ENCODE measurements at regions of chr15 and their contacts with region 1.

Region 1: GRCh38 chr15:31215490-31216214 is 111.0 kb upstream of the KLF13 start:
- DNase-seq: peak; percentile 82 to 83
- ATAC-seq: peak; percentile 71 to 74
- H3K4me3 ChIP-seq: peak overlapping the region; percentile 55 to 67 (median 59)
- H3K27ac ChIP-seq: peak overlapping the region; percentile 83 to 94 (median 92)
- H3K4me1 ChIP-seq: peaks cover 12 to 20% of the 10 kb centered on the region in 2 donors
- H3K27me3 ChIP-seq: no peaks in the 10 kb centered on the region
- CTCF ChIP-seq: peak; percentile 88 to 95 (median 90)
- POLR2A ChIP-seq: peak; percentile 61 to 69

Region 2: GRCh38 chr15:30903497-30904201 is 312.0 kb before region 1 on chr15 and contains the start of gene FAN1:
- in situ Hi-C with region 1: no loop called
- intact Hi-C with region 1: loop called (anchors 10 kb)
- DNase-seq: peak; percentile 81 to 89
- ATAC-seq: peak; percentile 95 to 98
- H3K4me3 ChIP-seq: peak within 1 kb of the TSS; percentile 63 to 98 (median 85)
- H3K27ac ChIP-seq: peak within 1 kb of the TSS; percentile 79 to 91 (median 87)
- H3K4me1 ChIP-seq: peaks cover 26 to 31% of the 10 kb centered on the region in 2 donors
- H3K27me3 ChIP-seq: no peaks in the 10 kb centered on the region
- CTCF ChIP-seq: no peak
- POLR2A ChIP-seq: peak; percentile 71 to 78
- total RNA-seq, gene FAN1: 20.0 to 27.5 (median 25.3) TPM

Region 3: DNA sequence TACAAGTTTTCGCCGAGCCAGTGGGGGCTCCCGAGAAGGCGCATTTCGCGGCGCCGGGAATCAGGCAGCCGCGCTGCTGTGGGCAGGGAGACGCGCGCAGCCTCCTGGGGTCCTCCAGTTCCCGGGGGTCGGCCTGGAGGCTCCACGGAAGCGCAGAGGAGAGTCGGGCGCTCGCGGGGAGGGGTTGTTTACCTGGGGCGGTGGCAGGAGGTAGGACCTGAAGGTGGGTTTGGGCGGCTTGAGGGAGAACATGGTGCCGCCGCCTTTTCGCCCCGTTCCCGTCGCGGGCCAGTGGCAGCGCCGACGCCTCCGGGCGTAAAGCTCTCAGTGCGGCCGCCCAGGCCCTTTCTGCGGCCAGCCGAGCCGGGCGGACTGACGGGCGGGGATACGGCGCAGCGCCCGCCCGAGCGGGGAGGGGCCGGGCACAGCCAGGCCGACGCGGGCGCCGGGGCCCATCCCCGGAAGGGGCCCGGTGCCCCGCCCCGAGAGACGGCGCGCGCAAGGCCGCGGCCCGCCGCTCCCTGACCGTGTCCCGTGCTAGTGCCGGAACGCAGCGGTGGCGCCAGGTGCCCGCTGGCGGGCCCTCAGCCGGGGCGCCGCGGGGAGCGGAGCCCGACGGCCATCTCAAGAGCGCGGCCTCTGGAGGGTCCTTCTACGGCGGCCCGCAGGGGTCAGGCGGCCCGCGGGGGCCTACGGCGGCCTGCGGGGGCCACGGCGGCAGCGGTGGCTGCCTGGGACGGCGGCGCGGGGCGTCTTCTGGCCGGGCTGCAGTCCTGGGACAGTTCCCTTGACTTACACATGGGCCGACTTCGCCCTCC is 224.2 kb before region 1 on chr15 and contains the start of gene MTMR10:
- in situ Hi-C with region 1: no loop called
- intact Hi-C with region 1: loop called (anchors 5 kb)
- DNase-seq: peak; percentile 41 to 76
- ATAC-seq: peak; percentile 84 to 87
- H3K4me3 ChIP-seq: peak within 1 kb of the TSS; percentile 83 to 100 (median 92)
- H3K27ac ChIP-seq: peak within 1 kb of the TSS; percentile 94 to 99 (median 96)
- H3K4me1 ChIP-seq: peaks cover 45 to 52% of the 10 kb centered on the region in 2 donors
- H3K27me3 ChIP-seq: no peaks in the 10 kb centered on the region
- CTCF ChIP-seq: peak in 3 of 5 experiments; percentile 24 to 65 (median 56)
- POLR2A ChIP-seq: peak; percentile 95 to 96
- total RNA-seq, gene MTMR10: 36.6 to 63.4 (median 40.4) TPM

Region 4: DNA sequence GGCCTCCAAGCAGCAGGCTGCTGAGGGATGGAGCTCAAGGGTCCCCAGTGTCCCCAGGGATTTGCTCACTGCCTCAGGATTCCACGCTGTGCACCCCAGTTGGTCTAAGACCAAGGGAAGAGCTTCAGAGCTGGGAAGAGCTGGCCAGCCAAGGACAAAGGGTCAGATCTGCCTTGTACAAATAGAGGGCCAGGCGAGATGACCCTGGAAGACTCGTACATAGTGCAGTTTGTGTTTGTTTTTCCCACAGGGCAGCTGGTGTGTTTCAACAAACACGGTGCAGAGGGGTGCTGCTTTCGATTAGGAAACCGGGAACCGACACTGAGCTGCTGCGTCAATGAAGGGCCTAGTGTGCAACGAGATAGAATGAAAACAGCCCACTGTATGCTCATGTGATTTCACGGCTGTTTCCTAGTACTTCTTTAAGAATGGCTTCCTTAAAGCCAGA is 58.0 kb before region 1 on chr15:
- in situ Hi-C with region 1: no loop called
- intact Hi-C with region 1: no loop called
- DNase-seq: no peak
- ATAC-seq: no peak
- H3K4me3 ChIP-seq: no peak overlapping the region
- H3K27ac ChIP-seq: no peak overlapping the region
- H3K4me1 ChIP-seq: peaks cover 10 to 12% of the 10 kb centered on the region in 2 donors
- H3K27me3 ChIP-seq: no peaks in the 10 kb centered on the region
- CTCF ChIP-seq: no peak
- POLR2A ChIP-seq: no peak

Region 5: GRCh38 chr15:31326156-31326732 is 110.6 kb after region 1 on chr15:
- in situ Hi-C with region 1: loop called in 3 of 4 experiments (anchors 5 to 10 kb)
- intact Hi-C with region 1: loop called (anchors 1 kb)
- DNase-seq: peak; percentile 97 to 99
- ATAC-seq: peak; percentile 67 to 70
- H3K4me3 ChIP-seq: peak overlapping the region; percentile 72 to 97 (median 88)
- H3K27ac ChIP-seq: peak overlapping the region; percentile 93 to 99 (median 98)
- H3K4me1 ChIP-seq: peaks cover 29 to 34% of the 10 kb centered on the region in 2 donors
- H3K27me3 ChIP-seq: no peaks in the 10 kb centered on the region
- CTCF ChIP-seq: peak in 3 of 5 experiments; percentile 3 to 33 (median 21)
- POLR2A ChIP-seq: peak; percentile 97 to 99

Region 6: DNA sequence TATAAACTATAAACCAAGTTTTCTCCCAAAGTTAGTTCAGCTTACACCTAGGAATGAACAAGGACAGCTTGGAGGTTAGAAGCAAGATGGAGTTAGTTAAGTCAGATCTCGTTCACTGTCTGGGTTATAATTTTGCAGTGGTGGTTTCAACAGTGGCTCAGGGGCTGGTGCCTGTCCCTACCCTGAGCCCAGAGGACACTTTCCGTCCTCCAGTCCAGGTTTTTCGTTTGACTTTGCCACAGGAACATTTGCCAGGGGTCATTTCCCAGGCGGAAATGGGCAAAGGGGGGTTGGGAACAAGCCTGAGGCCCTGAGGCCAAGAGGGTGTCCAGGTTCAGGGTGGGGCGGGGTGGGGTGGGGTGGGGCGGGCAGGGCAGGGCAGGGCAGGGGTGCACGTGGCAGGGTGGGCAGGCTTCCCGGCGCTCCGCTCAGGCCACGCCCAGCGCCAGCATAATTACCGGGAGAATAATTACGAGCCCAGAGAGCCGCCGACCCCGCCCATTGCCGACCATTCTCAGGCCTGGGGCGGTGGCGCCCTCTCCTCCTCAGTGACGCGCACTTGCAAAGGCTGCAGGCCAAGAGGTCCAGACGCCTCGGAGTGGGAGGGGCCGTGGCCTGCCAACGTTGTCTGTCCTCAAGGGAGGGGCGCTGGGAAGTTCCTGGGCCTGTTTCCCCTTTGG is 181.4 kb after region 1 on chr15:
- in situ Hi-C with region 1: loop called in 1 of 4 experiments (anchors 10 kb)
- intact Hi-C with region 1: loop called (anchors 1 kb)
- DNase-seq: peak; percentile 89 to 96
- ATAC-seq: peak; percentile 77 to 84
- H3K4me3 ChIP-seq: peak overlapping the region; percentile 1 to 41 (median 31)
- H3K27ac ChIP-seq: peak overlapping the region; percentile 87 to 93 (median 90)
- H3K4me1 ChIP-seq: peaks cover 23 to 27% of the 10 kb centered on the region in 2 donors
- H3K27me3 ChIP-seq: no peaks in the 10 kb centered on the region
- CTCF ChIP-seq: peak in 2 of 5 experiments; percentile 20 to 32
- POLR2A ChIP-seq: no peak

Region 7: GRCh38 chr15:31458591-31459399 is 243.1 kb after region 1 on chr15:
- in situ Hi-C with region 1: no loop called
- intact Hi-C with region 1: no loop called
- DNase-seq: no peak
- ATAC-seq: no peak
- H3K4me3 ChIP-seq: no peak overlapping the region
- H3K27ac ChIP-seq: no peak overlapping the region
- H3K4me1 ChIP-seq: peaks cover 0 to 9% of the 10 kb centered on the region in 2 donors
- H3K27me3 ChIP-seq: no peaks in the 10 kb centered on the region
- CTCF ChIP-seq: no peak
- POLR2A ChIP-seq: no peak

Region 8: GRCh38 chr15:31488426-31489204 is 273.0 kb after region 1 on chr15:
- in situ Hi-C with region 1: loop called in 1 of 4 experiments (anchors 5 kb)
- intact Hi-C with region 1: loop called (anchors 1 kb)
- DNase-seq: peak; percentile 29 to 43
- ATAC-seq: peak; percentile 61 to 70
- H3K4me3 ChIP-seq: no peak overlapping the region
- H3K27ac ChIP-seq: no peak overlapping the region
- H3K4me1 ChIP-seq: peaks cover 8 to 21% of the 10 kb centered on the region in 2 donors
- H3K27me3 ChIP-seq: peaks cover 0 to 3% (median 0%) of the 10 kb centered on the region in 3 donors
- CTCF ChIP-seq: peak; percentile 74 to 89 (median 80)
- POLR2A ChIP-seq: no peak